ENCODE measurements at regions of chr3 and their contacts with region 1.

Region 1: DNA sequence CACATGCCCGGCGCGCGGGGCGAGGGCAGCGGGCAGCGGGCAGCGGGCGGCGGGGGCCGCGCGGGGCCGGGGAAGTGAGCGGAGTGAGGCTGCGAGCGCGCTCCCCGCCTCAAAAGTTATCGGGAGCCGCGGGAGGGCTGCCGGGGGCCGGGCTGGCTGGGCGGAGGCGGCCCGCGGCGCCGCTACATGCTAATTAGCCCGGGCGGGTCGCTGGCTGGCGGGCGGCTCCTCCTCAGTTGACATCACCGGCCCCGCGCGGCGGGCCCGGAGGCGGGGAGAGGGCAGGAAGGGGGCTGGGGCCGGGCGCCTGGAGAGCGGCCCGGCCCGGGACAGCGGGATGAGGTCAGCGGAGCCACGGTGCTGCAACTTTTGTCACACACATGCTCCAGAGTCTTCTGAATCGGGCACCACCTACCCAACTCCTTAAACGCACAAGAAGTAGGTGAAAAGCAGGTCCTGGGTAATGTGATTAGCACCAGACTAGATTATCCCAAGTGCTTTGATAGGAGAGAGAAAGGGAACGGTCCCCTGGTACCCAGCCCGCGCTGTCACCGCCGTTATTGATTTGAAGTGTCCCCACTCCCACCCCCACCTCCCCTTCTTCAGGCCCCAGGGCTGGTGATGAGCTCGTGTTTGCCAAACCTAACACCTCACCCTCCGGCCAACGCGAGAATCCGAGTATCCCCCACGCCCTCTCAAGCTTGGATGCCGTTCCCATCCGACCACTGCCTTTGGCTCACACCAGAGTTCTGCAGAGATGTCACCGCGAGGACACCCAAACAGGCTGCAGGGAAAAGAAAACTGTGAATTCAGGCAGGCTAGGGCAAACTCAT is at the start of gene HEG1:
- DNase-seq: peak; percentile 54 to 85 (median 72)
- ATAC-seq: peak; percentile 78
- H3K4me3 ChIP-seq: peak within 1 kb of the TSS; percentile 94
- H3K4me3 Mint-ChIP-seq: peak within 1 kb of the TSS; percentile 89 to 100 (median 96)
- H3K27ac ChIP-seq: peak within 1 kb of the TSS; percentile 89
- H3K27ac Mint-ChIP-seq: peak within 1 kb of the TSS; percentile 84 to 99 (median 93)
- H3K4me1 ChIP-seq: peaks cover 34 to 35% of the 10 kb centered on the region in 2 donors
- H3K4me1 Mint-ChIP-seq: peaks cover 33 to 51% (median 46%) of the 10 kb centered on the region in 7 donors
- H3K27me3 ChIP-seq: no peaks in the 10 kb centered on the region
- H3K27me3 Mint-ChIP-seq: peaks cover 0 to 37% (median 6%) of the 10 kb centered on the region in 5 donors
- total RNA-seq, gene HEG1: 16.9 to 45.4 (median 20.0) TPM

Region 2: DNA sequence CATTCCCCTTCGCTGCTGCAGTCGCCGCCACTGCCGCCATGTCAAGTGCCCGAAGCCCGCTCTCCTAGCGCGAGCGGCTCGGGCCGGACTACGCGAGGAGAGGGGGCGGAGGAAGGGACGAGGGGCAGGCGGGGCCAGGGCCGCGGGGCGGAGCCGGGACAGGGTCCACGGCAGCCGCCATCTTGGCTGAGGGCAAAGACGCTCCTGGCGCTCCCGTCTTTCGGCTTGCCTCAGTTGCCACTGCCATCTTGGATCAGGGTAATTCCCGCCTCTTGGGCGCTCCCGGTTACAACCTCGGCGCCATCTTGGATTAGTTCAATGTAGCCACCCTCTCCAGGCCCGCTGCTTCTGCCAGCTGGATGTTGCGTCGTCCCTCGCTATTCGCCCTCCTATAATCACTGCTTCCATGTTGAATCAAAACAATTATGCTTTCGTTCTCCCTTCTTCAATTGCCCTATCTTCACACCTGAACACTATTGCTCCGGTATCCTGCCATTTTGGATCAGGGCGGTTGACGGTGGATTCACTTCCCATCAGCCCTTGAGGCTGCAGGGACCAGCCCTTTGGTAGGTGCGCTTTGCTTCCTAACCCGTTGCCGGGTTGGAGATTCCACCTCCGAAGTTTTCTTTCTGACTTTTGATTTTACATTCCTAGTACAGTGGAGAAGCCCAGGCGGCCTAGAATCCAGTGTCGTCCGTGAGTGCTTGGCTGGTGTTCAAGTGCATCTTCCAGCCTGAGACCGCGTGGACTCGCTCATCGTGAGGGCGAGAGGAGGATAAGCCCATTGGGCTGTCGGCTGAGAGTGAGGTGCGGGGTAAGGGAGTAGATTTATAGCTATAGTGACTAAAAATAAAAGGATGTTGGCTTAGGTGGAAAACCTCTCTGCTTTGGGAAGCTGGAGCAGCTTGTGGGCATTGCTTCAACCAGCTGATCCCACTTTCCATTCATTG is 1470.9 kb before region 1 on chr3 and contains the start of gene HACD2:
- CTCF ChIA-PET with region 1: no interaction called
- POLR2A ChIA-PET with region 1: no interaction called
- intact Hi-C with region 1: loop called in 1 of 2 experiments (anchors 10 kb)
- DNase-seq: peak; percentile 87 to 96 (median 90)
- ATAC-seq: peak; percentile 96
- H3K4me3 ChIP-seq: peak within 1 kb of the TSS; percentile 98
- H3K4me3 Mint-ChIP-seq: peak within 1 kb of the TSS in 3 of 10 donors; percentile 87 to 90 (median 89)
- H3K27ac ChIP-seq: peak within 1 kb of the TSS; percentile 79
- H3K27ac Mint-ChIP-seq: peak within 1 kb of the TSS; percentile 44 to 93 (median 83)
- H3K4me1 ChIP-seq: peaks cover 8 to 13% of the 10 kb centered on the region in 2 donors
- H3K4me1 Mint-ChIP-seq: peaks cover 14 to 32% (median 30%) of the 10 kb centered on the region in 7 donors
- H3K27me3 ChIP-seq: no peaks in the 10 kb centered on the region
- H3K27me3 Mint-ChIP-seq: no peaks in the 10 kb centered on the region
- total RNA-seq, gene HACD2: 15.9 to 28.3 (median 24.0) TPM

Region 3: DNA sequence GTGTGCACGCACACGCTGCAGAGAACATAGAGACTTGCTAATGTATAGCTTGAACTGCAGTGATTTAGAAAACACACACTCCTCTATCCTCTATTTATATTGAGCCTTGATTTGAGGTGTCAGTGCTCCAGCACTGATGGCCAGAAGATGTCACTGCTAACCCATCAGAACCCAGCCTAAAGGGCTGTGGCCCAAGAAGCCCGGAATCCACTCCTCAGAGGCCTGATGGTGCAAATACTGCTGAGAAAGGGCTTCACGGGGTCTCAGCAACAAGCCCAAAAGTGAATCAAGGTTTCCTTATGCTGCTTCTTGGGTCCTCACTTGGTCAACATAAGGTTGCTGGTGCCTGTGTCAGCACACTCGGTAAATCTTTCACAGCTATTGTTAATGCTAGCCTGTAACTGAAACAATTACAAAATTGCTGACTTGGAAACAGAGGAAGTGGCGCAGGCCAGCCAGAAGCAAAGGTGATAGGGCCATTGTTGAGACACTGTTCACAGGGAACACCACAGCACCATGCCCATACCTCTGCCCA is 60.6 kb before region 1 on chr3:
- CTCF ChIA-PET with region 1: interaction called, 3 read pairs
- POLR2A ChIA-PET with region 1: interaction called, 9 read pairs
- intact Hi-C with region 1: loop called (anchors 2 kb)
- DNase-seq: peak; percentile 28 to 69 (median 47)
- ATAC-seq: peak; percentile 93
- H3K4me3 ChIP-seq: no peak overlapping the region
- H3K4me3 Mint-ChIP-seq: peak overlapping the region in 2 of 10 donors; percentile 7 to 41
- H3K27ac ChIP-seq: no peak overlapping the region
- H3K27ac Mint-ChIP-seq: peak overlapping the region in 7 of 9 donors; percentile 21 to 80 (median 53)
- H3K4me1 ChIP-seq: no peaks in the 10 kb centered on the region
- H3K4me1 Mint-ChIP-seq: peaks cover 0 to 32% (median 19%) of the 10 kb centered on the region in 7 donors
- H3K27me3 ChIP-seq: no peaks in the 10 kb centered on the region
- H3K27me3 Mint-ChIP-seq: no peaks in the 10 kb centered on the region

Region 4: GRCh38 chr3:125075738-125076137 is 19.6 kb after region 1 on chr3:
- CTCF ChIA-PET with region 1: no interaction called
- POLR2A ChIA-PET with region 1: interaction called, 3 read pairs
- intact Hi-C with region 1: loop called in 1 of 2 experiments (anchors 2 kb)
- DNase-seq: no peak
- ATAC-seq: peak; percentile 55
- H3K4me3 ChIP-seq: no peak overlapping the region
- H3K4me3 Mint-ChIP-seq: no peak overlapping the region
- H3K27ac ChIP-seq: no peak overlapping the region
- H3K27ac Mint-ChIP-seq: no peak overlapping the region
- H3K4me1 ChIP-seq: no peaks in the 10 kb centered on the region
- H3K4me1 Mint-ChIP-seq: peaks cover 0 to 16% (median 0%) of the 10 kb centered on the region in 7 donors
- H3K27me3 ChIP-seq: no peaks in the 10 kb centered on the region
- H3K27me3 Mint-ChIP-seq: peaks cover 0 to 36% (median 0%) of the 10 kb centered on the region in 5 donors

Region 5: DNA sequence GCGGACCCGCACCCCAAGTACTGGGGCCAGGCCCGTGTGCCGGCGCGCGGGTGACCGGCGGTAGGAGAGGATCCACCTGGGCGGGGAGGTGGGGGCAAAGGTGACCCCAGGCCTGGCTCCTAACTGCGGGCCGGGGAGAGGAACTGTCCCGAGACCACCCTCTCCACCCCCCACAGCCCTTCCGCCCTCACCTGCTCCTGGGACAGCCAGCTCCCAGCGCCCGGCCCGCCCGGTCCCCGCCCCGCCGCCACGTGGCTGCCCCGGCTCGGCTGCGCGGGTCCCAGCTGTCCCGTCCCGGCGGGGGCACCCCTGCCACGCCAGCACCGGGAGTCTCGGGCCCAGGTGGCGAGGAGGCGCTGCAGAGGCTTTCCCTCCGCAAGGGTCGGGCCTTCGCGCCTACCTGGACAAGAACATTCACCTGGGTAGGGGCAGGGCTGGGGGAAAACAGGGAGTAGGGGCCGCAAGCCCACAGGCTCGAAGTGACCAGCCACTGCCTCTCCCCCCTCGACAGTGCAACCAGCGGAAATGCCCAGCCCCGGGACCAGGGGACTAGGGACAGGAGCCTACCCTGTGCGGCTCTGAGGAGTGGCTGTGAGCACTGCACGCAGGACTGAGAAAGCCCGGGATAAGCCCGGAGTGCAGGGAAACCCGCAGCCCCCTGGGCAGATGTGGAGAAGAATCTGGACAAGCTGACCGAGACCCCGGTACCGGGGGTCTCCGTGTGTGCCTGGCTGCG is 156.5 kb after region 1 on chr3 and contains the start of gene SLC12A8:
- CTCF ChIA-PET with region 1: no interaction called
- POLR2A ChIA-PET with region 1: no interaction called
- intact Hi-C with region 1: loop called in 1 of 2 experiments (anchors 5 kb)
- DNase-seq: no peak
- ATAC-seq: peak; percentile 42
- H3K4me3 ChIP-seq: no peak within 1 kb of the TSS
- H3K4me3 Mint-ChIP-seq: peak within 1 kb of the TSS; percentile 32 to 78 (median 55)
- H3K27ac ChIP-seq: no peak within 1 kb of the TSS
- H3K27ac Mint-ChIP-seq: peak within 1 kb of the TSS in 1 of 9 donors; percentile 78
- H3K4me1 ChIP-seq: peaks cover 0 to 3% of the 10 kb centered on the region in 2 donors
- H3K4me1 Mint-ChIP-seq: peaks cover 11 to 25% (median 18%) of the 10 kb centered on the region in 7 donors
- H3K27me3 ChIP-seq: peaks cover 0 to 8% of the 10 kb centered on the region in 2 donors
- H3K27me3 Mint-ChIP-seq: peaks cover 45 to 61% (median 60%) of the 10 kb centered on the region in 5 donors
- total RNA-seq, gene SLC12A8: 0.16 to 1.1 (median 0.83) TPM

Region 6: GRCh38 chr3:125519678-125520589 is 463.8 kb after region 1 on chr3 and contains the start of gene SNX4:
- CTCF ChIA-PET with region 1: no interaction called
- POLR2A ChIA-PET with region 1: no interaction called
- intact Hi-C with region 1: loop called (anchors 5 kb)
- DNase-seq: peak; percentile 70 to 87 (median 82)
- ATAC-seq: peak; percentile 97
- H3K4me3 ChIP-seq: peak within 1 kb of the TSS; percentile 71
- H3K4me3 Mint-ChIP-seq: peak within 1 kb of the TSS; percentile 89 to 98 (median 96)
- H3K27ac ChIP-seq: peak within 1 kb of the TSS; percentile 87
- H3K27ac Mint-ChIP-seq: peak within 1 kb of the TSS; percentile 85 to 96 (median 92)
- H3K4me1 ChIP-seq: peaks cover 0 to 4% of the 10 kb centered on the region in 2 donors
- H3K4me1 Mint-ChIP-seq: peaks cover 20 to 47% (median 37%) of the 10 kb centered on the region in 7 donors
- H3K27me3 ChIP-seq: no peaks in the 10 kb centered on the region
- H3K27me3 Mint-ChIP-seq: peaks cover 0 to 2% (median 0%) of the 10 kb centered on the region in 5 donors
- total RNA-seq, gene SNX4: 19.3 to 31.8 (median 25.2) TPM